ENCODE measurements at regions of chr6 and their contacts with region 1.

Region 1: DNA sequence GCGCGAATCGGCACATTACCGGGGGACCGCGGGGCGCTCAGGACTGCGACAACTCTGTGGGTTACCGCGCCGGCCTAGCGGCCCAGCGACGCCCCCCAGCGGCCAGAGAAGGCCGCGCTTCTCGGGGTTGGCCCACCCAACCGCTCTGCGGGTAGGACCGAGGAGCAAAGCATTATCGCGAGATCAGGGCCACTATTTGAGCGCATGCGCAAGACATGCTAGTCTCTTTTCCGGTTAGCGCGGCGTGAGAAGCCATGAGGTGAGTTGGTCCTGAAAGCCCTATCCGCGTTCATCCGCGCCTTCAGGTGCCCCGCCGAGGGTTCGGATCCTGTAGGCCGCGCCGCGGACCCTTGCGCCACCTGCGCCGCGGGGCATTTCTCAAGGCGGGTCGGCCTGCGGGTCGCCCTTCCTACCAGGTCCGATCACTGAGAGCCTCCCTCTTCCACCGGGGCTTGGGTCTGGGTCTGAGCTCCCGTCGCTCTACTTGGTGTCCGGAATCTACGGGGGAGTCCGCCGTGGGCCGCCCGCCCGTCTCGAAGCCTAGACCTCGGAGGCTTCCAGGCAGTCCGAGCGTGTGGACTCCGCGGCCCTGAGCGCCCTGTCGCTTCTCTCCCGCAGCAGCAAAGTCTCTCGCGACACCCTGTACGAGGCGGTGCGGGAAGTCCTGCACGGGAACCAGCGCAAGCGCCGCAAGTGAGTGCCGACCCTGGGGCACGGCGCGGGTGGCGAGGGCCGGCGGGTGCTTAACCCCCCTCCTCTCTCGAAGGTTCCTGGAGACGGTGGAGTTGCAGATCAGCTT is at the start of gene RPL10A:
- DNase-seq: peak; percentile 94 to 97 (median 96)
- H3K4me3 ChIP-seq: peak within 1 kb of the TSS; percentile 67 to 100
- H3K4me3 Mint-ChIP-seq: peak within 1 kb of the TSS; percentile 94 to 99 (median 98)
- H3K27ac ChIP-seq: peak within 1 kb of the TSS; percentile 74
- H3K27ac Mint-ChIP-seq: peak within 1 kb of the TSS; percentile 93 to 98 (median 98)
- H3K4me1 ChIP-seq: peaks cover 40% of the 10 kb centered on the region
- H3K4me1 Mint-ChIP-seq: peaks cover 29 to 53% (median 40%) of the 10 kb centered on the region in 4 donors
- H3K27me3 ChIP-seq: no peaks in the 10 kb centered on the region
- H3K27me3 Mint-ChIP-seq: no peaks in the 10 kb centered on the region
- total RNA-seq, gene RPL10A: 1,978 to 2,070 TPM

Region 2: GRCh38 chr6:35327349-35328027 is 140.9 kb before region 1 on chr6:
- CTCF ChIA-PET with region 1: interaction called, 10 read pairs
- POLR2A ChIA-PET with region 1: interaction called, 6 read pairs
- intact Hi-C with region 1: loop called (anchors 1 kb)
- DNase-seq: peak; percentile 72 to 82 (median 74)
- H3K4me3 ChIP-seq: no peak overlapping the region
- H3K4me3 Mint-ChIP-seq: peak overlapping the region in 5 of 8 donors; percentile 15 to 62 (median 44)
- H3K27ac ChIP-seq: no peak overlapping the region
- H3K27ac Mint-ChIP-seq: peak overlapping the region; percentile 19 to 95 (median 82)
- H3K4me1 ChIP-seq: peaks cover 24% of the 10 kb centered on the region
- H3K4me1 Mint-ChIP-seq: peaks cover 16 to 25% (median 20%) of the 10 kb centered on the region in 4 donors
- H3K27me3 ChIP-seq: no peaks in the 10 kb centered on the region
- H3K27me3 Mint-ChIP-seq: no peaks in the 10 kb centered on the region

Region 3: GRCh38 chr6:35342258-35343091 is 125.9 kb before region 1 on chr6 and contains the start of gene PPARD:
- CTCF ChIA-PET with region 1: interaction called, 76 read pairs
- POLR2A ChIA-PET with region 1: interaction called, 31 read pairs
- intact Hi-C with region 1: loop called (anchors 1 kb)
- DNase-seq: peak; percentile 94 to 98 (median 95)
- H3K4me3 ChIP-seq: peak within 1 kb of the TSS; percentile 50 to 97
- H3K4me3 Mint-ChIP-seq: peak within 1 kb of the TSS; percentile 87 to 99 (median 96)
- H3K27ac ChIP-seq: peak within 1 kb of the TSS; percentile 86
- H3K27ac Mint-ChIP-seq: peak within 1 kb of the TSS; percentile 87 to 99 (median 96)
- H3K4me1 ChIP-seq: peaks cover 52% of the 10 kb centered on the region
- H3K4me1 Mint-ChIP-seq: peaks cover 37 to 60% (median 51%) of the 10 kb centered on the region in 4 donors
- H3K27me3 ChIP-seq: no peaks in the 10 kb centered on the region
- H3K27me3 Mint-ChIP-seq: no peaks in the 10 kb centered on the region
- total RNA-seq, gene PPARD: 37.2 to 38.7 TPM

Region 4: GRCh38 chr6:35452186-35453090 is 15.9 kb before region 1 on chr6 and contains the start of gene FANCE:
- CTCF ChIA-PET with region 1: interaction called, 89 read pairs
- POLR2A ChIA-PET with region 1: interaction called, 107 read pairs
- intact Hi-C with region 1: loop called (anchors 1 kb)
- DNase-seq: peak; percentile 77 to 90 (median 81)
- H3K4me3 ChIP-seq: peak within 1 kb of the TSS; percentile 0 to 66
- H3K4me3 Mint-ChIP-seq: peak within 1 kb of the TSS; percentile 84 to 91 (median 87)
- H3K27ac ChIP-seq: peak within 1 kb of the TSS; percentile 59
- H3K27ac Mint-ChIP-seq: peak within 1 kb of the TSS; percentile 54 to 94 (median 89)
- H3K4me1 ChIP-seq: peaks cover 40% of the 10 kb centered on the region
- H3K4me1 Mint-ChIP-seq: peaks cover 29 to 53% (median 39%) of the 10 kb centered on the region in 4 donors
- H3K27me3 ChIP-seq: no peaks in the 10 kb centered on the region
- H3K27me3 Mint-ChIP-seq: no peaks in the 10 kb centered on the region
- total RNA-seq, gene FANCE: 8.9 to 9.0 TPM

Region 5: GRCh38 chr6:35496841-35497570 is 28.6 kb after region 1 on chr6 and contains the start of gene TEAD3:
- CTCF ChIA-PET with region 1: no interaction called
- POLR2A ChIA-PET with region 1: interaction called, 15 read pairs
- intact Hi-C with region 1: loop called (anchors 1 kb)
- DNase-seq: peak; percentile 48 to 68 (median 52)
- H3K4me3 ChIP-seq: peak within 1 kb of the TSS in 1 of 2 donors; percentile 59
- H3K4me3 Mint-ChIP-seq: peak within 1 kb of the TSS; percentile 72 to 85 (median 82)
- H3K27ac ChIP-seq: peak within 1 kb of the TSS; percentile 43
- H3K27ac Mint-ChIP-seq: peak within 1 kb of the TSS in 4 of 7 donors; percentile 9 to 70 (median 42)
- H3K4me1 ChIP-seq: peaks cover 10% of the 10 kb centered on the region
- H3K4me1 Mint-ChIP-seq: peaks cover 10 to 37% (median 17%) of the 10 kb centered on the region in 4 donors
- H3K27me3 ChIP-seq: no peaks in the 10 kb centered on the region
- H3K27me3 Mint-ChIP-seq: peaks cover 7 to 18% of the 10 kb centered on the region in 2 donors
- total RNA-seq, gene TEAD3: 0.20 TPM in 1 of 2 experiments, not detected in the other

Region 6: GRCh38 chr6:35552285-35552917 is 84.0 kb after region 1 on chr6:
- CTCF ChIA-PET with region 1: interaction called, 12 read pairs
- POLR2A ChIA-PET with region 1: interaction called, 3 read pairs
- intact Hi-C with region 1: no loop called
- DNase-seq: peak in 4 of 5 donors; percentile 56 to 62 (median 60)
- H3K4me3 ChIP-seq: no peak overlapping the region
- H3K4me3 Mint-ChIP-seq: no peak overlapping the region
- H3K27ac ChIP-seq: no peak overlapping the region
- H3K27ac Mint-ChIP-seq: no peak overlapping the region
- H3K4me1 ChIP-seq: no peaks in the 10 kb centered on the region
- H3K4me1 Mint-ChIP-seq: peaks cover 0 to 5% (median 3%) of the 10 kb centered on the region in 4 donors
- H3K27me3 ChIP-seq: no peaks in the 10 kb centered on the region
- H3K27me3 Mint-ChIP-seq: peaks cover 2% of the 10 kb centered on the region in 2 donors

Measured in CD4-positive, alpha-beta memory T cell (primary cell).